Activated CD4-positive, alpha-beta memory T cell treated with anti-CD3 and anti-CD28 coated beads for 36 hours (primary cell): ENCODE measurements at regions of chr11 and their contacts with region 1.

Region 1: DNA sequence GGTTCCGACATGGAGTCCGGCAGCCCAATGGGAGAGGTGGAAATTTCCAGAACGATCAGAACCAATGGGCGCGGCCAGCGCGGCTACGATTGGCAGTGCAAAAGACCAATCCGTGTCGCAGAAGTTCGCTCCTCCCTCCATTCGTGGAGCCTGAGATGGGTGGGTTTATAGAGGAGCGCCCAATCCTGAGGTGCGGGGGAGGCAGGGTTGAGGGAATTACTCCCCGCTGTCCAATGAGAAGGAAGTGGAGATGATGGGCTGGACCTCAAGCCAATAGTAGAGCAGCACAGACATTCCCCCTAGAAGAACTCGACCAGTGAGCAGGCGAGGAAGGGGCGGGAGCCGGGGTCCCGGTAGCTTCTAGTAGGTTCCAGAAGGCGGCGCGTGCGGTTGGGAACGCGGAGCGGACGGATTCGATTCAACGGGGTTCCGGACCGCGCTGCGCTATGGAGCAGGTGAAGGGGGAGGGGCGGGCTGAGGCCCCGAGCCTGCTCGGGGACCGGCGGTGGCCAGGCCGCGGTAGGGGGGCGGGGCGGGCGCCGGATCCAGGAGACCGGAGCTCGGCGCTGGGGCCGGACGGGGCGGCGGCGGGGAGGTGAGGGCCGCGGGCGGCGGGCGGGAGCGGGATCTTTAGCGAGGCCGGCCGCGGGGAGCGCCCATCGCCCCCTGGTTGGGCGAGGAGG is at the start of gene STIP1:
- DNase-seq: peak; percentile 99
- H3K4me3 Mint-ChIP-seq: peak within 1 kb of the TSS; percentile 91
- H3K27ac Mint-ChIP-seq: peak within 1 kb of the TSS; percentile 96
- H3K4me1 Mint-ChIP-seq: peaks cover 42% of the 10 kb centered on the region
- H3K27me3 Mint-ChIP-seq: no peaks in the 10 kb centered on the region
- total RNA-seq, gene STIP1: 402 to 413 TPM

Region 2: DNA sequence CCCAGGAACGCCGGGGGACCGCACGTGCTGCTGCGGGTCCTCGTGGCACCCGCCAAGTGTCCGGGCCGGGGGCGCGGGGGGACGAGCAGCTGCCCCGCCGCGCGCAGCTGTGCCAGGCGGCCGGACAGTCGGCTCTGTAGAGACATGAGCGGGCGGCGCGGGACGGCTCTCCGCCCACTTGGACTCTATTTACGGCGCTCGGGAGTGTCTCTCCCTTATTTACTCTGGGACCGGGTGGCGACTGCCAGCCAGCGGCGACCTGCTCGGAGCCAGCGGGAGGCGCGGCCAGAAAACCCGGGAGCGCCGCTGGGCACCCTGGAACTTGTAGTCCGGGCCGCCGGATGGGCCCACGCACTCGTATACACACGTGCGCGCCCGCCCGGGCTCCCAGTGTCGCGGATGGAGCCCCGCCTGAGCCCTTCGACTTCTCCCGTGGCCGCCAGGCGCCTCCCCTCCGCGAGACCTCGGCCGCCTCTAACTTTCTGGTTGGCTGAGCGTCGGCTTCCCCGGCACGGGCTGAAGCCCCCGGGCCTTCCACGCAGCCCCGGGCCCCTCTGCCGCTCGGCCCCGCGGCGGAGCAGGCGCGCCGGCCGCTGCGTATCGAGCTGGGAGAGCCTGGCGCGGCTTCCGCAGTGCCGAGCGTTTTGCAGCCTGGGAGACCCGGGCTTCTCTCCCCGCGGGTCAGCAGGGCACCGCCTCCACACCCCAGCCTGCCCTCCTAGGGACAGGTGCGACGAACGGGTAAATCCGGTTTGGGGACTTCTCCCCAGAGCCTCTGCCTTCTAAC is 19.9 kb before region 1 on chr11 and contains the start of gene MACROD1:
- CTCF ChIA-PET with region 1: interaction called, 3 read pairs
- POLR2A ChIA-PET with region 1: interaction called, 16 read pairs
- intact Hi-C with region 1: loop called (anchors 2 kb)
- DNase-seq: peak; percentile 88
- H3K4me3 Mint-ChIP-seq: peak within 1 kb of the TSS; percentile 87
- H3K27ac Mint-ChIP-seq: peak within 1 kb of the TSS; percentile 74
- H3K4me1 Mint-ChIP-seq: peaks cover 15% of the 10 kb centered on the region
- H3K27me3 Mint-ChIP-seq: no peaks in the 10 kb centered on the region
- total RNA-seq, gene MACROD1: 24.5 to 31.0 TPM

Region 3: GRCh38 chr11:64173616-64174355 is 12.2 kb before region 1 on chr11:
- CTCF ChIA-PET with region 1: interaction called, 8 read pairs
- POLR2A ChIA-PET with region 1: interaction called, 12 read pairs
- intact Hi-C with region 1: no loop called
- DNase-seq: no peak
- H3K4me3 Mint-ChIP-seq: no peak overlapping the region
- H3K27ac Mint-ChIP-seq: no peak overlapping the region
- H3K4me1 Mint-ChIP-seq: peaks cover 22% of the 10 kb centered on the region
- H3K27me3 Mint-ChIP-seq: no peaks in the 10 kb centered on the region

Region 4: GRCh38 chr11:64225612-64226506 is 39.9 kb after region 1 on chr11 and contains the starts of genes NUDT22 and TRPT1:
- CTCF ChIA-PET with region 1: interaction called, 5 read pairs
- POLR2A ChIA-PET with region 1: interaction called, 14 read pairs
- intact Hi-C with region 1: loop called (anchors 1 kb)
- DNase-seq: peak; percentile 95
- H3K4me3 Mint-ChIP-seq: peak within 1 kb of the TSS; percentile 88
- H3K27ac Mint-ChIP-seq: peak within 1 kb of the TSS; percentile 84
- H3K4me1 Mint-ChIP-seq: peaks cover 28% of the 10 kb centered on the region
- H3K27me3 Mint-ChIP-seq: no peaks in the 10 kb centered on the region
- total RNA-seq, gene NUDT22: 69.8 to 79.8 TPM
- total RNA-seq, gene TRPT1: 30.4 to 35.6 TPM

Region 5: DNA sequence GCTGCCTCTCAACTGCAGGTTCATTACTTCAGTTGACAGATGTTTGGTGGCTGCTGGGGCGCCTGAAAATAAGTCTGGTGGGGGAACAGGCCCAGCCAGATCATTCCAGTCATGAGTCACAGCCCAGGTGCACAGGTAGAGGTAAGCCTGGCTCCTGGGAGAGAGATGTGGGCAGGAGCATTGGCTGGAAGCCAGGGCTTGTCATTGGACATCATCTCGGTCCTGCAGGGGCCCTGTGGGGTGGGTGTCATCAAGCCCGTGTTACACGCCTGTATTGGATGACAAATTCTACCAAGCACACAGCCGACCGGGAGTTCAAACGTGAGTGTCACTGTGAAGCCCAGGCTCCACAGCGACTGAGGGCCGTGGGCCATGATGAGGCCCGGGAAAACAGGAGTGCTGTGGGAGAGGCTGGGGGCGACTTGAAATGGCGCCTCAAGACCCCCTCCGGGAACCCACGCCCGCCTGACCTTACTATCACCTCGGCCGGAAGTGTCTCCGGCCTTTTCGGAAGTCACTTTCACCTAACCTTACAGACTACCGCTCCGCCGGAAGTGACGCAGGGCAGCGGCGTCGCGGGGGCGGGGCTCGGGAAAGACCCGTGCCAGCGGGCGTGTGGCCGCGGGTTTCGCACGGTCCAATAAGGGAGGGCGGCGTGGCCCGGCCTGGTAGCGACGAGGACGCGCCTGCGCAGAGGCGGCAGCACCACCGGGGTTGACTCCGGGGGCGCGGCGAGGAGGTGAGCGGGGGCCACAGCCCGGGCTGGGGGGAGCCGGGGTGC is 54.6 kb after region 1 on chr11 and contains the start of gene FKBP2:
- CTCF ChIA-PET with region 1: interaction called, 4 read pairs
- POLR2A ChIA-PET with region 1: interaction called, 10 read pairs
- intact Hi-C with region 1: loop called (anchors 1 kb)
- DNase-seq: peak; percentile 98
- H3K4me3 Mint-ChIP-seq: peak within 1 kb of the TSS; percentile 89
- H3K27ac Mint-ChIP-seq: peak within 1 kb of the TSS; percentile 98
- H3K4me1 Mint-ChIP-seq: peaks cover 37% of the 10 kb centered on the region
- H3K27me3 Mint-ChIP-seq: no peaks in the 10 kb centered on the region
- total RNA-seq, gene FKBP2: 28.7 to 34.9 TPM

Region 6: DNA sequence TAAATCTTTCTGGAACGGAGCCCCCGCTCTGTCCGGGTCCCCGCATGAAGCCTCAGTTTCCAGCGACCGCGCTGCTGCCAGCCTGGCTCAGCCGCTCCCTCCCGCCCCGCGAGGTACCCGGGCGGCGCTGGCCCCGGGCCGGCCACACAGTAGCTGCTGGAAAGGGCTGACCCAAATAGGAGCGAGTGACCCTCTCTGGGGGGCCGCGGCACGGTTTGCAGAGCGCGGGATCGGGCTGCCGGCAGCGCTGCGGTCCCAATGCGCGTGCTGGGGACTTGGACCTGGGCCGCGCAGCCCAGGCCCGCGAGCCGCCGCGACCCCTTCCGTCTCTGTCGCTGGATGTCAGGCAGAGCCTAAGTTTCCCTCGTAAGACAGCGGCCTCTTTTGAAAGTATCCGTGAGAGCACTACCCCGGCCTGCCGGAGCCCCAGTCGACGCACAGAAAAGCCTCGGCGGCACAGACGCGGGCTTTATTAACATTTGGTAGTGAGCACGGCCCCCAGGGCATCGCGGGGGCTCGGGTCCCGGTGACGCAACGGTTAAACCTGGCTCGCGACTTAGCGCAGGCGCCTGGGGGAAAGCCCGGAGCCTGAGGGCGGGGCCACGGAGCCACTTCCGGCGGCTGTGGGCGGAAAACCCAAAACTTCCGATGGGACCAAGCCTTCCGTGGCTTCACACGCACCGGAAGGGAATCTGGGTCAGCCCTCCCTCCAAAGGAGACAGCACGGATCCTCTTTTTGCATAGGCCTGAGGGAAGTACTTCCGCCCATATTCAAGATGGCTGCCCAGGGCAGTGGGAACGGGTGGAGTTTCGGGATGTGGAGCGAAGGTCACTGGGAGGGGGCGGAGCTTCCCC is 83.7 kb after region 1 on chr11:
- CTCF ChIA-PET with region 1: no interaction called
- POLR2A ChIA-PET with region 1: interaction called, 11 read pairs
- intact Hi-C with region 1: loop called (anchors 1 kb)
- DNase-seq: peak; percentile 99
- H3K4me3 Mint-ChIP-seq: peak overlapping the region; percentile 89
- H3K27ac Mint-ChIP-seq: peak overlapping the region; percentile 95
- H3K4me1 Mint-ChIP-seq: peaks cover 15% of the 10 kb centered on the region
- H3K27me3 Mint-ChIP-seq: no peaks in the 10 kb centered on the region

Region 7: GRCh38 chr11:64343767-64344552 is 158.0 kb after region 1 on chr11:
- CTCF ChIA-PET with region 1: no interaction called
- POLR2A ChIA-PET with region 1: no interaction called
- intact Hi-C with region 1: no loop called
- DNase-seq: peak; percentile 25
- H3K4me3 Mint-ChIP-seq: no peak overlapping the region
- H3K27ac Mint-ChIP-seq: no peak overlapping the region
- H3K4me1 Mint-ChIP-seq: peaks cover 35% of the 10 kb centered on the region
- H3K27me3 Mint-ChIP-seq: no peaks in the 10 kb centered on the region